IMR-90 (cell line): ENCODE measurements at regions of chr18 and their contacts with region 1.

Region 1: GRCh38 chr18:36419905-36420531 is 122.5 kb downstream of the FHOD3 start:
- DNase-seq: peak; percentile 21
- ATAC-seq: no peak; the same call in 1 of the 2 replicates
- H3K4me3 ChIP-seq: no peak overlapping the region
- H3K27ac ChIP-seq: peak overlapping the region; percentile 53; the same call in 1 of the 2 replicates
- H3K4me1 ChIP-seq: peaks cover 15% of the 10 kb centered on the region
- H3K27me3 ChIP-seq: no peaks in the 10 kb centered on the region
- CTCF ChIP-seq: no peak
- POLR2A ChIP-seq: no peak
- RAD21 ChIP-seq: no peak

Region 2: DNA sequence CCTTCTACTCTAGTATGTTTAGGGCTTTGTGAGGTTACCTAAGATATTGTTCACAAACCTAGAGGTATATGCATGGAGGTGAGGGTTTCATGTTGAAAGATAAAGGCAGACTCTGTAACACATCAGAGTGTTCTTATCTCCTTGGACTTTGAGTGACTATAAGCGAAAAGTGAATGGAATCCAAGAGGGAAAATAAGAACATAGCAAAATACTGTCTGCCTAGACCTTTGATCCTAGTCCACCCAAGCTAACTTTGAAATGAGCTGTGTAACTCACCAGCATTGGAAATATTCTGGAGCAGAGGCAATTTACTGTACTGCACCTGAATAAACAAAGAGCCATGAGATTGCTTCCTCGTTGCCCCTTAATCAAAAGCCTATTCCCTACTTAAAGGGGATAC is 866.7 kb before region 1 on chr18:
- CTCF ChIA-PET with region 1: no interaction called
- POLR2A ChIA-PET with region 1: interaction called, 14 read pairs
- dilution Hi-C with region 1: no loop called
- in situ Hi-C with region 1: no loop called
- intact Hi-C with region 1: no loop called
- DNase-seq: no peak
- ATAC-seq: no peak
- H3K4me3 ChIP-seq: no peak overlapping the region
- H3K27ac ChIP-seq: no peak overlapping the region
- H3K4me1 ChIP-seq: no peaks in the 10 kb centered on the region
- H3K27me3 ChIP-seq: peaks cover 13% of the 10 kb centered on the region
- CTCF ChIP-seq: no peak
- POLR2A ChIP-seq: no peak
- RAD21 ChIP-seq: no peak

Region 3: DNA sequence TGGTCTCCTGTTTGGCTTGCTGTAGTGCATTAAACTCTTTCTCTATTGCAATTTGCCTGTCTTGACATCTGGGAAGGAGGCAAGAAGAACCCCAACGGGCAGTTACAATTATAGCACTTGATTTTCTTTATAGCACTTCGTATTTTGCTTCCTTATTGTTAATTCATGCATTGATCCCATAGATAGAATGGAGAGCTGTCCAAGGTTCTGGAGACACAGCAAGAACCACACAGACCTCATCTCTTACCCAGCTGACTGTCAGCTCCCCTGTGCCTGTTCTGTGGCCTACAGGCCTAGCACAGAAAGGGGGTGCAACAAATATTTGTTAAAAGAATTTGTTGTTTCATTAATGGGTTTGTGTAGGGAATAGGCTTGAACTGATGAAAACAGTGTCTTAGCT is 644.1 kb before region 1 on chr18:
- CTCF ChIA-PET with region 1: no interaction called
- POLR2A ChIA-PET with region 1: no interaction called
- dilution Hi-C with region 1: no loop called
- in situ Hi-C with region 1: no loop called
- intact Hi-C with region 1: no loop called
- DNase-seq: peak; percentile 9
- ATAC-seq: no peak
- H3K4me3 ChIP-seq: no peak overlapping the region
- H3K27ac ChIP-seq: no peak overlapping the region
- H3K4me1 ChIP-seq: no peaks in the 10 kb centered on the region
- H3K27me3 ChIP-seq: no peaks in the 10 kb centered on the region
- CTCF ChIP-seq: no peak
- POLR2A ChIP-seq: no peak
- RAD21 ChIP-seq: no peak